Posterior cingulate gyrus (tissue), 11 donors: ENCODE measurements at regions of chr19 and their contacts with region 1.

Region 1: GRCh38 chr19:46840136-46840942 is 10.3 kb downstream of the AP2S1 start:
- DNase-seq: peak in 5 of 10 donors; percentile 34 to 91 (median 46)

Region 2: DNA sequence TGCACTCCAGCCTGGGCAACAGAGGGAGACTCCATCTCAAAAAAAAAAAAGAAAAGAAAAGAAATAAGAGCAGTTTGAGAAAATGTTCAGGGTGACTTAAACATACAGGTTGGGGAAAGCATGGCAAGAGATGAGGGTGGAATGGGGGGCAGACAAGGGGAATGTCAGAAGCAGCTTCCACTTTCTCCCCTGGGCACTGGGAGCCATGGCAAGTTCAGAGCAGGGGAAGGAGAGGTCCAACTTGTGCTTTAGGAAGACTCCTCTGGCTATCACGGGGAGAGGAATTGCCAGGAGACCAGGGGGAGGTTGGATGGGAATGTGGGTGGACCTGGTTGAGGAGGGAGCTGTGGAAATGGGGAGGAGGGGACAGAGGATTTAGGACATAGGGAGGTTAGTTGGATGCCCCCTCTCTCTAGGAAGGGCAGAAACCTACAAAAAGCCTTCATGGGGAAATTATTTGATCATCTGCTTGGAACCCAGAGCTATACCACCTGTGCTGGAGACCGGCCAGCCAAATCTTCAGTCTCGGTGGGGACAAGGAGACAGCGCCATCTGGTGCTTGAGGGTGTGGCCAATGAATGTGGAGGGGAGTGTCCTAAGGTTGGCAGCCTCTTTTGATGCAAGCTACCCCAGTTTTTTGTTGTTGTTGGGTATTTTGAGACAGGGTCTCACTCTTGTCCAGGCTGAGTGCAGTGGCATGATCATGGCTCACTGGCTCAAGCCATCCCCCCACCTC is 86.8 kb before region 1 on chr19:
- intact Hi-C with region 1: loop called (anchors 1 kb)
- DNase-seq: peak in 2 of 10 donors; percentile 43 to 63

Region 3: DNA sequence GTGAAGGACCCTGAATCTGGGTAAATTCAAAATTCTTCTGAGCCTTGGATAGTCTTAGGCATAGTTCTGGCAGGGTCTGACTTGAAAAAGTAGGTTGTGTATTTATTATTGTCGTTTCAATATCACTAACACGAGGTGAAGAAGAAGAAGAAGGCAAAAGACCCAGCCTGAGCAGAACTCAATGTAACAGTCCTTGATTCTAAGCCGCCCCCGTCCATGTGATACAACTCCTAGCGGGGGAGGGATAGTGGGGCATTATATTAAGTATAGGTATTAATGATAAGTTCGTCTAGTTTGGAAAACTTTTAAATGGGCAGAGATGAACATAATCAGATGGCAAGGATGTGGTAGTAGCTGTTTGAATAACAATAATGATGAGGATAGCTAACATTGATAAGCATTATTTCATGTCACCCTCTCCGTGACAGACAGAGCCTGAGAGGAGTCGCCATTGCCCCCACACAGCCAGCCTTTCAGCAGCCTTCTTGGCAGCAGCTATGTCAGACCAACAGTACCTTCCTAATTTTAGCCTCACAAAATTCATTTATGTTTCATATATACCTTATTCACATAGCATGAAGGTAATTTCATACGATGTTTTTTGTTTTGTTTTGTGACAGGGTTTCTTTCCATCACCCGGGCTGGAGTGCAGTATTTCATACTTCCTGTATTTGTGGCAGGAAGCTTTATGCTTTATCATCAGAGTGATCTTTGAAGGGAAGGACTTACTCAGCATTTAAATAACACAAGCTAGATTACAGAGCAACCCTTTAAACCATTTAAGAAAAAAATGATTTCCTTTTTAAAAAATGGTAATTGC is 114.9 kb after region 1 on chr19:
- intact Hi-C with region 1: no loop called
- DNase-seq: no peak